ENCODE measurements at regions of chr6 and their contacts with region 1.

Region 1: GRCh38 chr6:15389765-15390723 is 144.2 kb downstream of the JARID2 start:
- DNase-seq: no peak
- H3K4me3 ChIP-seq: no peak overlapping the region
- CTCF ChIP-seq: peak; percentile 64

Region 2: GRCh38 chr6:15260099-15260821 is 129.8 kb before region 1 on chr6:
- CTCF ChIA-PET with region 1: interaction called, 10 read pairs
- POLR2A ChIA-PET with region 1: no interaction called
- DNase-seq: no peak
- H3K4me3 ChIP-seq: no peak overlapping the region
- CTCF ChIP-seq: no peak